PC-3 (cell line): ENCODE measurements at regions of chr2 and their contacts with region 1.

Region 1: GRCh38 chr2:101831351-101831865 is 133.9 kb downstream of the MAP4K4 start:
- DNase-seq: peak; percentile 79
- ATAC-seq: peak; percentile 77
- H3K4me3 ChIP-seq: no peak overlapping the region
- H3K27ac ChIP-seq: peak overlapping the region; percentile 33
- H3K4me1 ChIP-seq: peaks cover 38% of the 10 kb centered on the region
- H3K27me3 ChIP-seq: no peaks in the 10 kb centered on the region
- CTCF ChIP-seq: peak; percentile 84

Region 2: GRCh38 chr2:101341901-101342624 is 489.3 kb before region 1 on chr2:
- CTCF ChIA-PET with region 1: interaction called, 5 read pairs
- POLR2A ChIA-PET with region 1: no interaction called
- intact Hi-C with region 1: loop called (anchors 5 kb)
- DNase-seq: peak; percentile 90
- ATAC-seq: peak; percentile 87
- H3K4me3 ChIP-seq: no peak overlapping the region; the same call in 1 of the 2 replicates
- H3K27ac ChIP-seq: peak overlapping the region; percentile 35
- H3K4me1 ChIP-seq: peaks cover 42% of the 10 kb centered on the region
- H3K27me3 ChIP-seq: no peaks in the 10 kb centered on the region
- CTCF ChIP-seq: peak; percentile 92

Region 3: DNA sequence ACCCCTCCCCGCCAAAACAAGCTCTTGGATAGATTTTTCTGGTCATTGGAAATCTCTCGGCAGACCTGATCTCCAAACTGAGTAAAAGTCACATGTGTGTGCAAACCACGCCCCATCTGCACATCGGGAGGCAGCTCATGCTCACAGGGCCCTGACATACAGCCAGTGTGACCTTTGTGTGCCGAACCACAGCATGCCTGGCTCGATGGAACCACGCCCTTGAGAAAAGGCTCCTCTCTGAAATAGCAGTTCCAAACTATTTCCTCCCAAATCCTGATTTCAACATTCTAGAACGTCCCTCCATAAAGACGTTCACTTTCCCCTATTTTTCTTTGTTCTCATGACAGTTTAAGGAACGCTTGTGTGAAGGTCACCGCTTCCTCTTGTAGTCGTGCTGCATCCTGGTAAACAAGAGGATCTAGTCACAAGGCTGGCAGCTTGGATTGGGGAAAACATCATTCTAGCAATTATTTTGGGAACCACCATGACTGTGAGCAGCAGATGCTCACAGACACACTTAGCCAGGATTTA is 193.2 kb before region 1 on chr2:
- CTCF ChIA-PET with region 1: no interaction called
- POLR2A ChIA-PET with region 1: no interaction called
- intact Hi-C with region 1: no loop called
- DNase-seq: no peak
- ATAC-seq: no peak
- H3K4me3 ChIP-seq: no peak overlapping the region
- H3K27ac ChIP-seq: no peak overlapping the region
- H3K4me1 ChIP-seq: no peaks in the 10 kb centered on the region
- H3K27me3 ChIP-seq: no peaks in the 10 kb centered on the region
- CTCF ChIP-seq: no peak

Region 4: GRCh38 chr2:101759162-101759561 is 72.2 kb before region 1 on chr2:
- CTCF ChIA-PET with region 1: no interaction called
- POLR2A ChIA-PET with region 1: no interaction called
- intact Hi-C with region 1: loop called (anchors 5 kb)
- DNase-seq: peak; percentile 92
- ATAC-seq: peak; percentile 65
- H3K4me3 ChIP-seq: 0 out of 2 replicates have a peak overlapping the region, but pooled peaks have one; percentile 5
- H3K27ac ChIP-seq: peak overlapping the region; percentile 66
- H3K4me1 ChIP-seq: peaks cover 57% of the 10 kb centered on the region
- H3K27me3 ChIP-seq: no peaks in the 10 kb centered on the region
- CTCF ChIP-seq: no peak